Body of pancreas (tissue), 4 donors: ENCODE measurements at regions of chr12 and their contacts with region 1.

Region 1: DNA sequence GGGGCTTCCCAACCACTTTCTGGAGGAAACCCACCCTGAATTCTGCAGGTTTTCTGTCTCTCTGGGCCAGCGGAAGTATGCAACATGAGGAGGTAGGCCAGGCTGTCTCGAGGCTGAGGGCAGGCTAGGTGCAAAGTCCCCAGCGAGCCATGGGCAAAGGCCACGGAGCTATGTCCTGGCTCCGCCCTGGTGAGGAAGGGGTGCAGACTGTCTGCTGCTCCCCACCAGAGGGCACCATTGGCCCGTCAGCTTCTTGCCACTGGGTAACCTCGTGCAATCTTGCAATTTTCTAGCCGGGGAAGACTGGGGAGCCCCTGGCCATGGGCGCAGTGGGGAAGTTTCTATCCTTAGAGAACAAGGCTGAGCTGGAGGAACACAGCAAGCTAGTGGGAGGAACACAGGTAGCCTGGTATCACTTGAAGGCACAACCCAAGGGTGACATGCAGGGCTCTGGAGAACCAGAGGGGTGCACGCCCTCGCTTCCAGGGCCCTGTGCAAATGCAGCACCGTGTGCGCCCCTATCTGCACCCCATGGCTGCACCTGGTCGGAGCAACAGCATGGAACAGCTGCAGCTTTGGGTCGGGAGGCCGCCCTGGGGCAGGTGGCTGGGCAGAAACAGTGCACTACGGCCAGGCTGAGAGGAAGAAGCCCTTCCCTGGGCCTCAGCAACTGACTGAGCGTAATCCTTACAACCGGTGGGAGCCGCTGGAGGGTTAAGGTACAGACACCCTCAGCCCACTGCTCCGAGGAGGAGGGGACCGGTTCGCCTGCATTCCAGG is 27.6 kb upstream of the RPLP0 start:
- DNase-seq: peak; percentile 90 to 92 (median 90)
- ATAC-seq: peak; percentile 73
- H3K4me3 ChIP-seq: no peak overlapping the region
- H3K27ac ChIP-seq: peak overlapping the region; percentile 35 to 88 (median 80)
- H3K4me1 ChIP-seq: peaks cover 84% of the 10 kb centered on the region
- H3K27me3 ChIP-seq: no peaks in the 10 kb centered on the region
- CTCF ChIP-seq: peak; percentile 89 to 99 (median 98)
- POLR2A ChIP-seq: no peak

Region 2: GRCh38 chr12:120265473-120266179 is 37.1 kb after region 1 on chr12 and contains the start of gene PXN:
- intact Hi-C with region 1: loop called (anchors 5 kb)
- DNase-seq: peak; percentile 87 to 93 (median 92)
- ATAC-seq: peak; percentile 90
- H3K4me3 ChIP-seq: peak within 1 kb of the TSS; percentile 84 to 89
- H3K27ac ChIP-seq: peak within 1 kb of the TSS; percentile 66 to 88 (median 78)
- H3K4me1 ChIP-seq: peaks cover 35% of the 10 kb centered on the region
- H3K27me3 ChIP-seq: no peaks in the 10 kb centered on the region
- CTCF ChIP-seq: peak; percentile 73 to 96 (median 84)
- POLR2A ChIP-seq: peak; percentile 44 to 72 (median 55)
- total RNA-seq, gene PXN: 29.3 to 35.9 TPM

Region 3: GRCh38 chr12:120399531-120399930 is 171.1 kb after region 1 on chr12:
- intact Hi-C with region 1: no loop called
- DNase-seq: no peak
- ATAC-seq: no peak
- H3K4me3 ChIP-seq: no peak overlapping the region
- H3K27ac ChIP-seq: no peak overlapping the region
- H3K4me1 ChIP-seq: peaks cover 5% of the 10 kb centered on the region
- H3K27me3 ChIP-seq: no peaks in the 10 kb centered on the region
- CTCF ChIP-seq: no peak
- POLR2A ChIP-seq: no peak